T-cell (primary cell): ENCODE measurements at regions of chr12 and their contacts with region 1.

Region 1: GRCh38 chr12:93419388-93420034 is 22.2 kb downstream of the UBE2N start:
- DNase-seq: peak in 1 of 35 experiments; percentile 70
- ATAC-seq: peak; percentile 57 to 73 (median 66)
- H3K4me3 ChIP-seq: no peak overlapping the region
- H3K4me3 Mint-ChIP-seq: no peak overlapping the region
- H3K27ac ChIP-seq: no peak overlapping the region
- H3K27ac Mint-ChIP-seq: peak overlapping the region; percentile 71 to 78
- H3K4me1 ChIP-seq: peaks cover 15 to 43% of the 10 kb centered on the region in 2 experiments
- H3K4me1 Mint-ChIP-seq: peaks cover 86 to 90% (median 87%) of the 10 kb centered on the region in 3 donors
- H3K27me3 ChIP-seq: no peaks in the 10 kb centered on the region
- H3K27me3 Mint-ChIP-seq: no peaks in the 10 kb centered on the region

Region 2: GRCh38 chr12:92928962-92929915 is 490.3 kb before region 1 on chr12 and contains the start of gene EEA1:
- CTCF ChIA-PET with region 1: interaction called in 1 of 2 experiments, 12 read pairs
- POLR2A ChIA-PET with region 1: no interaction called
- DNase-seq: peak; percentile 88 to 96 (median 92)
- ATAC-seq: peak; percentile 84 to 92 (median 85)
- H3K4me3 ChIP-seq: peak within 1 kb of the TSS; percentile 79 to 87
- H3K4me3 Mint-ChIP-seq: peak within 1 kb of the TSS; percentile 83 to 88 (median 88)
- H3K27ac ChIP-seq: peak within 1 kb of the TSS; percentile 93
- H3K27ac Mint-ChIP-seq: peak within 1 kb of the TSS; percentile 89 to 95
- H3K4me1 ChIP-seq: peaks cover 14 to 22% of the 10 kb centered on the region in 2 experiments
- H3K4me1 Mint-ChIP-seq: peaks cover 36 to 41% (median 38%) of the 10 kb centered on the region in 3 donors
- H3K27me3 ChIP-seq: no peaks in the 10 kb centered on the region
- H3K27me3 Mint-ChIP-seq: no peaks in the 10 kb centered on the region
- total RNA-seq, gene EEA1: 21.4 to 29.5 (median 23.5) TPM

Region 3: DNA sequence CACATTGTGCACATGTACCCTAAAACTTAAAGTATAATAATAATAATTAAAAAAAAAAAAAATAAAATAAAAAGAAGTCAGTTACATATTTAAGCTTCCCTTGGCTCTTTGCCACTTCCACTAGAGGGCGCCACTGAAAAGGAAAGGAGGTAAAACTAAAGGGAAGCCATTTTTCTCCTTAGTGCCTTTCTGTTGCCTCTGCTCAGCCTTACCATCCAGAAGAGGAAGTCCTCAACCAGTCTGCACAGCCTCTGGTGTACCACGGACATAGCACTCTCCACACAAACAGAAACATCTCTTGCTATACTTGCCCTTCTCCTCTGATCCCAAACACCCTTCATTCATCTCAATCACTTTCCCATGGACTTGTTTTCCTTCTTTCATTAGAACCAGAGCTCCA is 321.4 kb before region 1 on chr12:
- CTCF ChIA-PET with region 1: interaction called, 9 to 16 read pairs
- POLR2A ChIA-PET with region 1: no interaction called
- DNase-seq: peak; percentile 26 to 82 (median 60)
- ATAC-seq: peak; percentile 45 to 83 (median 48)
- H3K4me3 ChIP-seq: no peak overlapping the region
- H3K4me3 Mint-ChIP-seq: no peak overlapping the region
- H3K27ac ChIP-seq: no peak overlapping the region
- H3K27ac Mint-ChIP-seq: no peak overlapping the region
- H3K4me1 ChIP-seq: peaks cover 0 to 4% of the 10 kb centered on the region in 2 experiments
- H3K4me1 Mint-ChIP-seq: peaks cover 6 to 7% (median 7%) of the 10 kb centered on the region in 3 donors
- H3K27me3 ChIP-seq: no peaks in the 10 kb centered on the region
- H3K27me3 Mint-ChIP-seq: no peaks in the 10 kb centered on the region

Region 4: GRCh38 chr12:93397412-93397811 is 22.1 kb before region 1 on chr12:
- CTCF ChIA-PET with region 1: interaction called, 5 to 16 read pairs
- POLR2A ChIA-PET with region 1: no interaction called
- DNase-seq: no peak
- ATAC-seq: no peak
- H3K4me3 ChIP-seq: no peak overlapping the region
- H3K4me3 Mint-ChIP-seq: no peak overlapping the region
- H3K27ac ChIP-seq: no peak overlapping the region
- H3K27ac Mint-ChIP-seq: no peak overlapping the region
- H3K4me1 ChIP-seq: no peaks in the 10 kb centered on the region
- H3K4me1 Mint-ChIP-seq: peaks cover 0 to 4% (median 4%) of the 10 kb centered on the region in 3 donors
- H3K27me3 ChIP-seq: no peaks in the 10 kb centered on the region
- H3K27me3 Mint-ChIP-seq: no peaks in the 10 kb centered on the region

Region 5: GRCh38 chr12:93434256-93434865 is 14.8 kb after region 1 on chr12:
- CTCF ChIA-PET with region 1: interaction called, 7 to 53 read pairs
- POLR2A ChIA-PET with region 1: interaction called, 3 to 4 read pairs
- DNase-seq: no peak
- ATAC-seq: no peak
- H3K4me3 ChIP-seq: no peak overlapping the region
- H3K4me3 Mint-ChIP-seq: peak overlapping the region in 1 of 3 donors; percentile 29
- H3K27ac ChIP-seq: no peak overlapping the region
- H3K27ac Mint-ChIP-seq: no peak overlapping the region
- H3K4me1 ChIP-seq: peaks cover 34 to 46% of the 10 kb centered on the region in 2 experiments
- H3K4me1 Mint-ChIP-seq: peaks cover 85 to 91% (median 88%) of the 10 kb centered on the region in 3 donors
- H3K27me3 ChIP-seq: no peaks in the 10 kb centered on the region
- H3K27me3 Mint-ChIP-seq: no peaks in the 10 kb centered on the region

Region 6: GRCh38 chr12:93946542-93947150 is 527.1 kb after region 1 on chr12:
- CTCF ChIA-PET with region 1: no interaction called
- POLR2A ChIA-PET with region 1: no interaction called
- DNase-seq: no peak
- ATAC-seq: no peak
- H3K4me3 ChIP-seq: no peak overlapping the region
- H3K4me3 Mint-ChIP-seq: no peak overlapping the region
- H3K27ac ChIP-seq: no peak overlapping the region
- H3K27ac Mint-ChIP-seq: no peak overlapping the region
- H3K4me1 ChIP-seq: no peaks in the 10 kb centered on the region
- H3K4me1 Mint-ChIP-seq: no peaks in the 10 kb centered on the region
- H3K27me3 ChIP-seq: peaks cover 0 to 4% of the 10 kb centered on the region in 2 experiments
- H3K27me3 Mint-ChIP-seq: no peaks in the 10 kb centered on the region